Activated CD8-positive, alpha-beta T cell treated with anti-CD3 and anti-CD28 coated beads for 36 hours (primary cell): ENCODE measurements at regions of chr3 and their contacts with region 1.

Region 1: GRCh38 chr3:183122257-183122932 is 23.1 kb upstream of the MCCC1 start:
- DNase-seq: no peak
- ATAC-seq: peak; percentile 56
- H3K4me3 Mint-ChIP-seq: no peak overlapping the region
- H3K27ac Mint-ChIP-seq: no peak overlapping the region
- H3K4me1 Mint-ChIP-seq: peaks cover 6% of the 10 kb centered on the region
- H3K27me3 Mint-ChIP-seq: peaks cover 3% of the 10 kb centered on the region
- CTCF ChIP-seq: peak; percentile 87

Region 2: DNA sequence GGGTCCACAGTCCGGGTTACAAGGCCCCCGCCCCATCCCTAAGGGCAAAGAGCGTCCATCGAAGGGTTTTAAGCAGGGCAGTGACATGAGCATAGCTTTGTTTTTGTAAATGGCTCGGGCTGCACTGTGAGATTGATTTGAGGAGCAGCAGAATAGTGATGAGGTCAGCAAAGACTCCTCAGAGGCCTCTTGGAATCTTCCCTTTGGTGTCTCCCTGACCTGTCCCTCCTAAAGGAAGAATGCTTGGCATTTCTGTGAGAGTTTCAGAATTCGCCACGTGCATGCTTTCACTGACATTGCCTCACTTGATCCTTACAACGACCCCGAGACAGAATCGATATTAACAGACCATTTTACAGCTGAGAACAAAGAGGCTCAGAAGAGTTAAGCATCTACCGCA is 19.8 kb after region 1 on chr3:
- CTCF ChIA-PET with region 1: interaction called, 10 read pairs
- POLR2A ChIA-PET with region 1: no interaction called
- intact Hi-C with region 1: no loop called
- DNase-seq: no peak
- ATAC-seq: no peak
- H3K4me3 Mint-ChIP-seq: no peak overlapping the region
- H3K27ac Mint-ChIP-seq: no peak overlapping the region
- H3K4me1 Mint-ChIP-seq: no peaks in the 10 kb centered on the region
- H3K27me3 Mint-ChIP-seq: no peaks in the 10 kb centered on the region
- CTCF ChIP-seq: no peak

Region 3: GRCh38 chr3:183161552-183162336 is 39.3 kb after region 1 on chr3:
- CTCF ChIA-PET with region 1: interaction called, 23 read pairs
- POLR2A ChIA-PET with region 1: no interaction called
- intact Hi-C with region 1: no loop called
- DNase-seq: peak; percentile 39
- ATAC-seq: peak; percentile 22
- H3K4me3 Mint-ChIP-seq: peak overlapping the region; percentile 87
- H3K27ac Mint-ChIP-seq: peak overlapping the region; percentile 87
- H3K4me1 Mint-ChIP-seq: peaks cover 39% of the 10 kb centered on the region
- H3K27me3 Mint-ChIP-seq: no peaks in the 10 kb centered on the region
- CTCF ChIP-seq: no peak

Region 4: DNA sequence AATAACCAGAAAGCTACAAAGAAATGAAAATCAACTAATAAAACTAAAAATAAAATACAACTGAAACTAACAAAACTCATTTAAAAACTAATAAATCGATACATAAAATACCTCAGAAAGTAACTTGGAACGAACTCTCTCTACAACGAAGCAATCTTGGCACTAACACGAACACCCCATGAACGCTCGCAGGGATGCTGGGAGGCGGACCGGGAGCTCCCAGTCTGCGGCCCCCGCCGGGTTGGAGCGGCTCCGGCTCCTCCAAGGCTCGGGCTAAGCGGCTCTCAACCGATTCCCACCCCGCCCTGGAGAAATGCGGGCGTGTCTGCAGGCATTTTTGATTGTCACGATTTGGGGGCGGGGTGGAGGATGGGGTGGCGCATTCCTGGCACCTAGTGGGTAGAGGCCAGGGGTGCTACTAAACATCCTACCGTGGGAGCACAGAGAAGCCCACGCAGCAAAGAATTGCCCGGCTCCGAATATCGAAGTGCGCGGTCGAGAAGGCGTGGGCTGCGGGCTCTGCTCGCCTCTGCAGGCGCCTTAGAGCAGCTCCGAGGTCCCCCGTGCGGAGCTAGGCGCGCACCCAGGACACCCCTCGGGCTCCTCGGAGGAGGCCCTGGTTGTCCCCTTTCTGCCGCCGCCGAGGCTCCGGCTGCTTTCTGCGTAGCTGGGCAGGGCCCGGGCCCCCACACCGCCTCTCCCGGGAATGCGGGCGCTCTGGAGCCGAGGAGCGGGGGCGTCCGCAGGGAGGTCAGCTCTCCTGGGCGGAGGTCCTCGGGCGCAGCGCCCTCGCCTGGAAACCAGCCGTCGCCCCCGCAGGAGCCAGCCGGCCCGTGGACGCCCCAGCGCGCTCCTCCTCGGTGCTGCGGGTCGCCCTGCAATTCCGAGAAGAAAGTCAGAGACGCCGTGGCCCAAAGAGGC is 56.5 kb after region 1 on chr3:
- CTCF ChIA-PET with region 1: interaction called, 38 read pairs
- POLR2A ChIA-PET with region 1: no interaction called
- intact Hi-C with region 1: loop called (anchors 5 kb)
- DNase-seq: peak; percentile 79
- ATAC-seq: peak; percentile 84
- H3K4me3 Mint-ChIP-seq: peak overlapping the region; percentile 73
- H3K27ac Mint-ChIP-seq: no peak overlapping the region
- H3K4me1 Mint-ChIP-seq: peaks cover 11% of the 10 kb centered on the region
- H3K27me3 Mint-ChIP-seq: peaks cover 24% of the 10 kb centered on the region
- CTCF ChIP-seq: peak; percentile 29

Region 5: DNA sequence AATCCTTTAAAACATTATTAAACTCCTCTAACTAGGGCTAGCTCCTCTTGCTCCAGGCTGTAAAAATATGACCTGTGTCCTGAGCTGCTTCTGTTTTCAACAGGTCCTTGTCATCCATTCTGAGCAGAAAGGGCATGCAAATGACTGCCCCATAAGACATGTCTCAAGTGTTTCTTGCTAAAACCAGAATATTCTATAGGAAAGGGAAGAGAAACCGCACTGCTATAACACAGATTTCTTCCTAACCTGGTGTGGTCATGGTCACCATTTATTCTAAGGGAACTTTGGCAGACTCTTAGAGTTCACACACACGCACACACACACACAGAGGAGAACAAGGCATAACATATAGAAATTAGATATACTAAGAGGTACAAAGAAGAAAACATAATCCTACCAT is 96.4 kb after region 1 on chr3:
- CTCF ChIA-PET with region 1: no interaction called
- POLR2A ChIA-PET with region 1: no interaction called
- intact Hi-C with region 1: no loop called
- DNase-seq: no peak
- ATAC-seq: no peak
- H3K4me3 Mint-ChIP-seq: no peak overlapping the region
- H3K27ac Mint-ChIP-seq: peak overlapping the region; percentile 44
- H3K4me1 Mint-ChIP-seq: peaks cover 26% of the 10 kb centered on the region
- H3K27me3 Mint-ChIP-seq: no peaks in the 10 kb centered on the region
- CTCF ChIP-seq: no peak

Region 6: GRCh38 chr3:183377307-183377959 is 255.0 kb after region 1 on chr3:
- CTCF ChIA-PET with region 1: interaction called, 129 read pairs
- POLR2A ChIA-PET with region 1: no interaction called
- intact Hi-C with region 1: loop called (anchors 1 kb)
- DNase-seq: no peak
- ATAC-seq: peak; percentile 73
- H3K4me3 Mint-ChIP-seq: no peak overlapping the region
- H3K27ac Mint-ChIP-seq: peak overlapping the region; percentile 10
- H3K4me1 Mint-ChIP-seq: peaks cover 37% of the 10 kb centered on the region
- H3K27me3 Mint-ChIP-seq: no peaks in the 10 kb centered on the region
- CTCF ChIP-seq: no peak

Region 7: DNA sequence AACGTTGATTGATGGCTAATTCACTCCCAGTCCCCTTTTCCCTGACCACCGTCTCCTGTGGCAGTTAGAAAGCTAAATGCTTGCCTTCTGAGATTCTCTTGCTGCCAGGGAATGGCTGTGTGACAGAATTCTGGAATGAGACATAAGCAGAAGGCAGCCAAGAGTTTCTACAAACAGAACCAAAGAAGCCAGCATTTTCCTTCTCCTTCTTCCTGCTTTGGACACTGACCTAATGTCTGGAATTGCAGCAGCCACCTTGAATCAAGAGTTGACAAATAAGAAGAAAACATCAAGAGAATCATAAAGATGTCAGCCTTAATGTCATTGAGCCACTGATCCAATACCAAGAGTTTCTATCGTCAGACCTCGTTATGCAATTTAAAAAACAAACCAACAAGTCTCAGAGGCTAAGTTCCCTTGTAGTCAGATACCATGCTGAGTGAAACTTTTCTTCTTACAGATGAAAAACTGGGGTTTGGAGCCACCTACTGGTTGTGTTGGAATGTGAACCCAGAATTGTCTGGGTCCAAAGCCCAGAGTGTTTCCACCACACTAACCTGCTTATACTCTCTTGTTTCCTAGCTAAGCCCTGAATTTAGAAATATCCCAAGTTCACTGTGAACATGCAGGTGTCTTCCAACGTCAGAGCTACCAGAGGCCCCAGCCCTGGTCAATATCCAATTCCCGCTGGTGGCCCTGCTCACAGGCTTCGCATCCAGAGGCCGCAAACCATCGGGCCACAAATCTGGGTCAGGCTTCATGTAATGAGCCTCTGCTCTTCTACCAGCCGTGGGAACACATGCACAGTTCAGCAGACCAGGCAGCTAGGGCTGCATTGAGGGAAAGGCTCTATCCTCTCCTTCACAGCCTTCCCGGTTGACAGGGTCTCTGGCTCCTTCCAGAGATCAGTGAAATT is 263.6 kb after region 1 on chr3:
- CTCF ChIA-PET with region 1: interaction called, 129 read pairs
- POLR2A ChIA-PET with region 1: no interaction called
- intact Hi-C with region 1: loop called (anchors 1 kb)
- DNase-seq: peak; percentile 77
- ATAC-seq: peak; percentile 76
- H3K4me3 Mint-ChIP-seq: no peak overlapping the region
- H3K27ac Mint-ChIP-seq: peak overlapping the region; percentile 39
- H3K4me1 Mint-ChIP-seq: peaks cover 11% of the 10 kb centered on the region
- H3K27me3 Mint-ChIP-seq: no peaks in the 10 kb centered on the region
- CTCF ChIP-seq: peak; percentile 72

Region 8: DNA sequence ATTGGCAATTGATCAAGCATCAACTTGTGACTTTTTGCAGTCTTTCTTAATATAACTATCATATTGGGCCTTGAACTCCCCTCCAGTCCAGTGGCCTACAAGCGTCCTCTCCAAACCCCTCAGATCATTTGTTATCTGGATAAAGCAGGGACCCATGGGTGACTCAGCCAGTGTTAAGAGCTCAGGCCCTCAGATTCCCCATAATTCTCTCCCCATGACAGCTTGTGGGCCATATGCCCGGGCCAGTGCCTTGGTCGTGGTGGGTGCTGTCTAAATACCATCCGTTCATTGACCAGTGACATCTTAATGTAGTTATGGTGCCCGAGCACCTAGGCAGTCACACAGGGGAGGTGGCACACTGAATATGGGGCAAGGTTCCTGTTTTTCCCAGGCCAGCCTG is 287.9 kb after region 1 on chr3:
- CTCF ChIA-PET with region 1: interaction called, 13 read pairs
- POLR2A ChIA-PET with region 1: no interaction called
- intact Hi-C with region 1: no loop called
- DNase-seq: no peak
- ATAC-seq: no peak
- H3K4me3 Mint-ChIP-seq: no peak overlapping the region
- H3K27ac Mint-ChIP-seq: no peak overlapping the region
- H3K4me1 Mint-ChIP-seq: no peaks in the 10 kb centered on the region
- H3K27me3 Mint-ChIP-seq: no peaks in the 10 kb centered on the region
- CTCF ChIP-seq: no peak